CD8-positive, alpha-beta T cell (primary cell): ENCODE measurements at regions of chr16 and their contacts with region 1.

Region 1: GRCh38 chr16:2682209-2683021 is at the start of gene KCTD5:
- DNase-seq: peak; percentile 91 to 98 (median 96)
- ATAC-seq: peak; percentile 96
- H3K4me3 ChIP-seq: peak within 1 kb of the TSS; percentile 98 to 99
- H3K4me3 Mint-ChIP-seq: peak within 1 kb of the TSS; percentile 94
- H3K27ac ChIP-seq: peak within 1 kb of the TSS; percentile 73 to 85
- H3K27ac Mint-ChIP-seq: peak within 1 kb of the TSS; percentile 96
- H3K4me1 ChIP-seq: peaks cover 19% of the 10 kb centered on the region
- H3K4me1 Mint-ChIP-seq: peaks cover 32% of the 10 kb centered on the region
- H3K27me3 ChIP-seq: no peaks in the 10 kb centered on the region
- H3K27me3 Mint-ChIP-seq: no peaks in the 10 kb centered on the region
- CTCF ChIP-seq: no peak
- total RNA-seq, gene KCTD5: 34.2 to 36.0 TPM

Region 2: DNA sequence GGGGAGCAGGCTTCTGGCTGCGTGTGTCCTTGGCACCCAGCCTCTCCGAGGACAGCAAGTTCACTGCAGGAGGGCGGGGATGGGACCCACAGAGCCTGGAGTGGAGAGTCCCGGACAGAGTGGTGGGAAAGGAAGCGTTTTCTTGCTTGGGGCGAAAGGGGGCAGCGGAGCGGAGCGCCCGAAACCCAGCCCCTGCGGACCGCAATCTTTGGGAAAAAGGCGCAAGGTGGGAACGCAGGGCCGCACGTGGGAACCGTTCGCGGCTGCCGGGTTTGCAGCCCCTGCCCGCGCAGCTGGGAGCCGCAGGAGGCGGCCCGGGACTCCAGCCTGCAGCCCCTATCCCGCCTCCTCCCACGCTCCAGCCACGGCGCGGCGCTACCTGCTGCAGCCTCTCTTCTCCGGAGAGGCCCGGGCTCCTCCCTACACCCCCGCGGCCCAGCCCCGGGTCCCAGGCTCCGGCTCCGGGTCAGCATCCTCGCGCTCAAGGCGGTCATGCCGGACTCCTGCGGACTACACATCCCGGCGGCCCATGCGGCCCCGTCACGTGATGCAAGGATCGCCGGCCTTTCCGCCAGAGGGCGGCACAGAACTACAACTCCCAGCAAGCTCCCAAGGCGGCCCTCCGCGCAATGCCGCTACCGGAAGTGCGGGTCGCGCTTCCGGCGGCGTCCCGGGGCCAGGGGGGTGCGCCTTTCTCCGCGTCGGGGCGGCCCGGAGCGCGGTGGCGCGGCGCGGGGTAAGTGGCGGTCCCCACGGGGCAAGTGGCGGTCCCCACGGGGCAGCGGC is 634.9 kb before region 1 on chr16 and contains the starts of genes NTHL1 and TSC2:
- CTCF ChIA-PET with region 1: no interaction called
- POLR2A ChIA-PET with region 1: no interaction called
- intact Hi-C with region 1: loop called in 1 of 2 experiments (anchors 5 kb)
- DNase-seq: peak; percentile 82 to 96 (median 92)
- ATAC-seq: peak; percentile 89
- H3K4me3 ChIP-seq: peak within 1 kb of the TSS; percentile 90 to 93
- H3K4me3 Mint-ChIP-seq: peak within 1 kb of the TSS; percentile 91
- H3K27ac ChIP-seq: peak within 1 kb of the TSS; percentile 60 to 64
- H3K27ac Mint-ChIP-seq: peak within 1 kb of the TSS; percentile 62
- H3K4me1 ChIP-seq: peaks cover 17% of the 10 kb centered on the region
- H3K4me1 Mint-ChIP-seq: peaks cover 24% of the 10 kb centered on the region
- H3K27me3 ChIP-seq: no peaks in the 10 kb centered on the region
- H3K27me3 Mint-ChIP-seq: no peaks in the 10 kb centered on the region
- CTCF ChIP-seq: peak; percentile 39
- total RNA-seq, gene NTHL1: 1.7 to 2.0 TPM
- total RNA-seq, gene TSC2: 76.2 to 84.1 TPM

Region 3: DNA sequence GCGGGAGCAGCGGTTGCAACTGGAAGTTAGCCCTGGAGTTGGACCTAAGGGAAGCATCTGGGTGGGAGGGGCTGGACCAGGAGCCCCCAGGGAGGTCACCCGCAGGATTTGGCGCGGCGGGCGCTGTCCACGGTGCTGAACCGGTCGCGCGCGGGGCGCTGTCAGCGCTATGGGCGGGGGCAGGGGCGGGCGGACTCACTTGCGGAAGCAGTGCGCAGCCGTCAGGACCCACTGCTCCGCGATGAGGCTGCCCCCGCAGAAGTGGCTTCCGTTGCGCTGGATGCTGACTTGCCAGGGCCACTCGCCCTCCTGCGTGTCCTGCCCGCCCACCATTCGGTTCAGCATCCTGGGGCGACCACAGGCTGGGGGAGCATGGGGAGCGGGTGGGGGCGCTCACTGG is 33.1 kb after region 1 on chr16:
- CTCF ChIA-PET with region 1: no interaction called
- POLR2A ChIA-PET with region 1: interaction called, 3 read pairs
- intact Hi-C with region 1: loop called in 1 of 2 experiments (anchors 1 kb)
- DNase-seq: peak; percentile 70 to 90 (median 87)
- ATAC-seq: peak; percentile 99
- H3K4me3 ChIP-seq: peak overlapping the region; percentile 8 to 33
- H3K4me3 Mint-ChIP-seq: peak overlapping the region; percentile 5
- H3K27ac ChIP-seq: no peak overlapping the region
- H3K27ac Mint-ChIP-seq: no peak overlapping the region
- H3K4me1 ChIP-seq: peaks cover 5% of the 10 kb centered on the region
- H3K4me1 Mint-ChIP-seq: peaks cover 3% of the 10 kb centered on the region
- H3K27me3 ChIP-seq: no peaks in the 10 kb centered on the region
- H3K27me3 Mint-ChIP-seq: no peaks in the 10 kb centered on the region
- CTCF ChIP-seq: no peak

Region 4: GRCh38 chr16:2720719-2721633 is 38.6 kb after region 1 on chr16:
- CTCF ChIA-PET with region 1: no interaction called
- POLR2A ChIA-PET with region 1: no interaction called
- intact Hi-C with region 1: loop called (anchors 1 kb)
- DNase-seq: peak; percentile 69 to 93 (median 82)
- ATAC-seq: peak; percentile 90
- H3K4me3 ChIP-seq: peak overlapping the region; percentile 52 to 62
- H3K4me3 Mint-ChIP-seq: peak overlapping the region; percentile 78
- H3K27ac ChIP-seq: peak overlapping the region; percentile 40 to 57
- H3K27ac Mint-ChIP-seq: peak overlapping the region; percentile 79
- H3K4me1 ChIP-seq: peaks cover 1% of the 10 kb centered on the region
- H3K4me1 Mint-ChIP-seq: no peaks in the 10 kb centered on the region
- H3K27me3 ChIP-seq: no peaks in the 10 kb centered on the region
- H3K27me3 Mint-ChIP-seq: peaks cover 12% of the 10 kb centered on the region
- CTCF ChIP-seq: peak; percentile 77

Region 5: GRCh38 chr16:2777231-2777902 is 95.0 kb after region 1 on chr16 and contains the start of gene ELOB:
- CTCF ChIA-PET with region 1: no interaction called
- POLR2A ChIA-PET with region 1: no interaction called
- intact Hi-C with region 1: loop called (anchors 2 to 5 kb)
- DNase-seq: peak; percentile 78 to 94 (median 88)
- ATAC-seq: peak; percentile 90
- H3K4me3 ChIP-seq: peak within 1 kb of the TSS; percentile 84 to 92
- H3K4me3 Mint-ChIP-seq: peak within 1 kb of the TSS; percentile 95
- H3K27ac ChIP-seq: peak within 1 kb of the TSS; percentile 96 to 99
- H3K27ac Mint-ChIP-seq: peak within 1 kb of the TSS; percentile 98
- H3K4me1 ChIP-seq: peaks cover 30% of the 10 kb centered on the region
- H3K4me1 Mint-ChIP-seq: peaks cover 50% of the 10 kb centered on the region
- H3K27me3 ChIP-seq: no peaks in the 10 kb centered on the region
- H3K27me3 Mint-ChIP-seq: no peaks in the 10 kb centered on the region
- CTCF ChIP-seq: no peak
- total RNA-seq, gene ELOB: 70.3 to 71.5 TPM